ENCODE measurements at regions of chr2 and their contacts with region 1.

Region 1: GRCh38 chr2:119407430-119408220 is 24.0 kb upstream of the TMEM37 start:
- DNase-seq: peak; percentile 71
- H3K4me3 ChIP-seq: no peak overlapping the region
- H3K27ac ChIP-seq: no peak overlapping the region
- H3K4me1 ChIP-seq: no peaks in the 10 kb centered on the region
- H3K27me3 ChIP-seq: peaks cover 15% of the 10 kb centered on the region; the same call in 1 of the 2 replicates

Region 2: DNA sequence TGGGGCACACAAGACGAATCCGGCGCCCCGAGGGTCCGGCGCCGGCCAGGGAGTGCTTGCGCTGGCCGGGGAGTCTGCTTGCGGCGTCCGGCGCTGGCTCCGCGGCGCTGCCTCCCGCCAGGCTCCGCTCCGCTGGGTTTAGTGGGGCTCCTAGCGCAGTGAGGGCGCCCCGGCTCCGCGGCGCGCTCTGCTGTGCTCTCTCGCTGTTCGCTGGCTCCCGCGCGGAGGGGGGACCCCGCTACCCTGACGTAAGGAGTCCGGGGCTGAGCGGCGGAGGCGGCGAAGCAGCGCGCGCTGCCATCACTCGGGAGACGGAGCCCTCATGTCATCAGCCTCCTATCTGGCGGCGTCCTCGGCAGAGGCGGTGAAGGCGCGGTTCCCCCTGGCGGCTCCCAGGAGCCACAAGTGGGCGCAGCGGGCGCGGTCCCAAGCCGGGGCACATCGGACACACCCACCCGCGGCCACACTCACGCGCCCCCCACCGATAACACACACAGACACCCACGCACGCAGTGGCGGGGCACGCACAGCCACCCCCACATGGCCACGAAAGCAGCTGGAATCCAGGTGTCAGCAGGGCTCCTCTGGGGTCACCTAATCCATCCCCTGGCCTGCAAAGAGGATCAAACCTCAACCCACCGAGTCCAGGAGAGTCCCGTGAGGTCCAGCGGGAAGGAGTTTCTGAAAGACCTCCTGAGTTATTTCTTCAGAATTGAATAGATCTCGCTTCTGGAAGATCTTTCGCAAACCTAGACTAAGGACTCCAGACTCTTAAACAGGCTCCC is 248.9 kb before region 1 on chr2 and contains the start of gene C1QL2:
- in situ Hi-C with region 1: no loop called
- DNase-seq: peak; percentile 16
- H3K4me3 ChIP-seq: 0 out of 2 replicates have a peak within 1 kb of the TSS, but pooled peaks have one; percentile 15
- H3K27ac ChIP-seq: no peak within 1 kb of the TSS
- H3K4me1 ChIP-seq: no peaks in the 10 kb centered on the region
- H3K27me3 ChIP-seq: peaks cover 87% of the 10 kb centered on the region
- total RNA-seq, gene C1QL2: not detected in 2 replicates

Region 3: DNA sequence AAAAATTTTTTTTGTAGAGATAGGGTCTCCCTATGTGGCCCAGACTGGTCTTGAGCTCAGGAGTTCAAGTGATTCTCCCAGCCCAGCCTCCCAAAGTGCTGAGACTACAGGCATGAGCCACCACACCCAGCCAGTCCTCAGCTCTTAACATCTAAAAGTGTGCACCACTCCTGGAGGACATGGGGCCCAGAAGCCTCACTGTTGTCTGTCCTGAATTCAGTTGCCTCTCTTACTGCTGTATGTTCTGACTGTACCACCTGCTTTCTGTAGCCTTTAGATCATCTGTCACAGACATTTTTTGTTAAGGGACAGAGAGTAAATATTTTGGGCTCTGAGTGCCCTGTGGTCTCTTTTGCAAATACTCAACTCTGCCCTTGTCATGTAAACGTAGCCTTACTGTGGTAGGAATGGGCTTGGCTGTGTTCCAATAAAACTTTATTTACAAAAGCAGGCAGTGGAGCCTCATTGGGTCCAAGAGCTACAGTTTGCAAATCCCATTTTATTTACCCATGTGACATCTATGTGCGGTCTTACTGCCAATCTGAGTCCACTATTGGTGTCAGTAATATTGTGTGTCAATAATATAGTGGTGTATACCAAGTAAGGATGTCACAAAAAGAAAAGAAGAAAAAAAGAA is 62.2 kb after region 1 on chr2:
- in situ Hi-C with region 1: loop called (anchors 5 kb)
- DNase-seq: no peak
- H3K4me3 ChIP-seq: no peak overlapping the region
- H3K27ac ChIP-seq: no peak overlapping the region
- H3K4me1 ChIP-seq: 0 out of 2 replicates have a peak, but pooled peaks cover 8% of the 10 kb centered on the region
- H3K27me3 ChIP-seq: peaks cover 5% of the 10 kb centered on the region

Region 4: DNA sequence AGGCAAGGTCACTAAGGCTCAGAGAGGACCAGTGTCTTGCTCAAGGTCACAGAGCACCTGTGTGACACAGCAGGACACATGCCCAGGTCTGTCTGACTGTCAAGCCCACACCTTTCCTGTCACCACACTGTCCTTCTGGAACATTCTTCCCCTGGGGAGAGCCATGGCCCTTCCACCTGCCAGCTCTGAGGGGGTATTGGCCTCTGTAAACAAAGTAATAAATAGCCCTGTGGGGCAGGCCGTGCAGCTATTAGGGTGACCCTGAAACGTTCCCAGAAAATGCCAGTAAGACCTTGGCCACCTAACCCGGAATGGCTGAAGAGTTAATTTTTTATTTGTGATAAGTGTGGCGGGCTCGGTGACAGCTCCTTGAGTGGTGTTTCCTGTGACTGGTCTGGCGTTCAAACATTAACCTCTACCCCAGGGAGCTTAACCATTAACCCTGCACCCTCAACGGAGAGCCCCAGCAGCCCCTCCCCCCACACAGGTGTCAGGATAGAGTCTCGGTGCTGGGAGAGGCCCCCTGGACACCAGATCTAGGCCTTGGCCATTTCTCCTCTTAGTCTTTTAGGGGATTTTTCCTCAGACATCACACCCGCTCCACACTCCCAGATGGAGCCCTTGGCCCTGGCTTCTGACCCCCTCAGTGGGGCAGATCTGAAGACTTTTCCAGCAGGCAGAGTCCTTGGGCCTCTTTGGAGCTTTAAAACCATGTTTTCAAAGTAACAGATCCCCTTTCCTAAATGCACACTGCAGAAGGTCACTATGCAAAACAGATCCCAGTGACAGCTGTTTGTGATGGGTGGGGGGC is 80.0 kb after region 1 on chr2:
- in situ Hi-C with region 1: no loop called
- DNase-seq: no peak
- H3K4me3 ChIP-seq: no peak overlapping the region
- H3K27ac ChIP-seq: no peak overlapping the region
- H3K4me1 ChIP-seq: peaks cover 30% of the 10 kb centered on the region
- H3K27me3 ChIP-seq: 0 out of 2 replicates have a peak, but pooled peaks cover 10% of the 10 kb centered on the region

Region 5: DNA sequence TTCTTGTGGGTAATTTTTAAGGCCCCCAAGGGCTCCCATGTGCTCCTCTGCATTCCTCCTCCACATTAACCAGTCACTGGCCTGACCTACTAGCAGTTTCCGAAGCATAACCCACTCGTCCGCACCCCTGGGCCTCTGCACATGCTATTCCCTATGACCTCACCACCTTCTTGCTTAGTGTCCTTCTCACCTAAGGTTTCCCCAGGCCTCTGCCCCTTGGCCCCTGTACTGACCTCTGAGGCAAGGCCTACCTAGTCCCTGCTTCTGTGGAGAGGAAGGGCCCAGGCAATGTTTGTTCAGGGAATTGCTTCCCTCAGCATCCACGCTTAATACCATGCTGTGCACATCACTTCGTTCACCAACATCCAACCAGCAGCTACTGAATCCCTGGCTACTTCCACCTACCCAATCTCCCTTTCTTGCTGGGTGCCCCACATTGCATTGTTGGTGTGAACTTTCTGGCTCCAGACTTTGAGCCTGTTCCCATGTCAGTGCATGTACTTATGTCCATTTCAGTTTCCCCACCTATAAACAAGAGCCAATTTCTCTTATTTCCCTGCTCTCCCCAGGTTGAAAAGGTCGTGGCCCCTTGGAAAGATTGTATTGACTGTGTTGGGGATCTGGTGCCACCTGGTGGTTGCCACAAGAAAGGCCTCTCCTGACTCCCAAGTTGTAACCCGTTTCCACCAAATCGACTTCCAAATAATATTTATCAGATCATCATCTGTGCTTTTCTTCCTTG is 252.1 kb after region 1 on chr2:
- in situ Hi-C with region 1: loop called (anchors 10 kb)
- DNase-seq: peak; percentile 61
- H3K4me3 ChIP-seq: no peak overlapping the region
- H3K27ac ChIP-seq: no peak overlapping the region
- H3K4me1 ChIP-seq: no peaks in the 10 kb centered on the region
- H3K27me3 ChIP-seq: peaks cover 10% of the 10 kb centered on the region

Measured in GM23248 (cell line).